Right ventricle myocardium superior (tissue), 1 donor: ENCODE measurements at regions of chr7 and their contacts with region 1.

Region 1: GRCh38 chr7:29189743-29190201 is 4.8 kb upstream of the CHN2 start:
- DNase-seq: peak; percentile 76
- ATAC-seq: peak; percentile 61

Region 2: DNA sequence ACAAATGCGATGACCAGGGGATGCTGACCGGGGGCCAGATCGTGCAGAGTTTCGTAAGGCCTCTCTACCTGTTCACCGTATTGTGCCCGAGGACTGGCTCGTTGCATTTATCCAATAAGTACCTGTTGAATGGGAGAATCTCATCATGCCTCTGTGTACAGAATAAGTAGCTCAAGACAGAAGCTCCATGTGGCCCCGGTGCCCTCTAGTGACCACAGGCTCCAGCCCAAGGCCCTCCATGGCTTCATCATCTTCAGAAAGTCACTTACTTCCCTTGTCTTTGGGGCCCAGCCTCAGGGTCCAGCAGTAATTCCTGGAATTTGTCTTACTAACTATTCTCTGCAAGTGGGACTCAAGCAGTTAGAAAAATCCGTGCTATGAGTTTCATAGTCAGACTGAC is 155.8 kb after region 1 on chr7:
- intact Hi-C with region 1: loop called (anchors 10 kb)
- DNase-seq: peak; percentile 56
- ATAC-seq: no peak